ENCODE measurements at regions of chr4 and their contacts with region 1.

Region 1: GRCh38 chr4:70505151-70505748 is 13.1 kb upstream of the AMTN start:
- DNase-seq: peak; percentile 7
- H3K4me3 ChIP-seq: no peak overlapping the region
- H3K27ac ChIP-seq: no peak overlapping the region
- H3K27me3 ChIP-seq: no peaks in the 10 kb centered on the region
- CTCF ChIP-seq: peak; percentile 99

Region 2: GRCh38 chr4:69811166-69811565 is 694.1 kb before region 1 on chr4:
- CTCF ChIA-PET with region 1: interaction called, 11 read pairs
- POLR2A ChIA-PET with region 1: no interaction called
- DNase-seq: no peak
- H3K4me3 ChIP-seq: no peak overlapping the region
- H3K27ac ChIP-seq: no peak overlapping the region
- H3K27me3 ChIP-seq: no peaks in the 10 kb centered on the region
- CTCF ChIP-seq: no peak

Region 3: GRCh38 chr4:70110917-70111316 is 394.3 kb before region 1 on chr4:
- CTCF ChIA-PET with region 1: no interaction called
- POLR2A ChIA-PET with region 1: no interaction called
- DNase-seq: no peak
- H3K4me3 ChIP-seq: no peak overlapping the region
- H3K27ac ChIP-seq: no peak overlapping the region
- H3K27me3 ChIP-seq: no peaks in the 10 kb centered on the region
- CTCF ChIP-seq: no peak

Region 4: GRCh38 chr4:70177090-70177489 is 328.2 kb before region 1 on chr4:
- CTCF ChIA-PET with region 1: no interaction called
- POLR2A ChIA-PET with region 1: no interaction called
- DNase-seq: no peak
- H3K4me3 ChIP-seq: no peak overlapping the region
- H3K27ac ChIP-seq: no peak overlapping the region
- H3K27me3 ChIP-seq: no peaks in the 10 kb centered on the region
- CTCF ChIP-seq: no peak

Region 5: GRCh38 chr4:70538869-70539268 is 33.6 kb after region 1 on chr4:
- CTCF ChIA-PET with region 1: no interaction called
- POLR2A ChIA-PET with region 1: no interaction called
- DNase-seq: no peak
- H3K4me3 ChIP-seq: no peak overlapping the region
- H3K27ac ChIP-seq: no peak overlapping the region
- H3K27me3 ChIP-seq: no peaks in the 10 kb centered on the region
- CTCF ChIP-seq: no peak

Measured in AG04450 (cell line).